ENCODE measurements at regions of chr6 and their contacts with region 1.

Region 1: GRCh38 chr6:37860226-37860839 is 40.8 kb downstream of the ZFAND3 start:
- DNase-seq: peak; percentile 53
- ATAC-seq: peak; percentile 35; the same call in 1 of the 3 replicates
- H3K4me3 ChIP-seq: no peak overlapping the region
- H3K27ac ChIP-seq: no peak overlapping the region
- H3K4me1 ChIP-seq: peaks cover 11% of the 10 kb centered on the region; the same call in 1 of the 2 replicates
- H3K27me3 ChIP-seq: no peaks in the 10 kb centered on the region
- CTCF ChIP-seq: peak; percentile 48
- EP300 ChIP-seq: no peak
- POLR2A ChIP-seq: no peak
- RAD21 ChIP-seq: peak; percentile 40; the same call in 1 of the 2 replicates

Region 2: DNA sequence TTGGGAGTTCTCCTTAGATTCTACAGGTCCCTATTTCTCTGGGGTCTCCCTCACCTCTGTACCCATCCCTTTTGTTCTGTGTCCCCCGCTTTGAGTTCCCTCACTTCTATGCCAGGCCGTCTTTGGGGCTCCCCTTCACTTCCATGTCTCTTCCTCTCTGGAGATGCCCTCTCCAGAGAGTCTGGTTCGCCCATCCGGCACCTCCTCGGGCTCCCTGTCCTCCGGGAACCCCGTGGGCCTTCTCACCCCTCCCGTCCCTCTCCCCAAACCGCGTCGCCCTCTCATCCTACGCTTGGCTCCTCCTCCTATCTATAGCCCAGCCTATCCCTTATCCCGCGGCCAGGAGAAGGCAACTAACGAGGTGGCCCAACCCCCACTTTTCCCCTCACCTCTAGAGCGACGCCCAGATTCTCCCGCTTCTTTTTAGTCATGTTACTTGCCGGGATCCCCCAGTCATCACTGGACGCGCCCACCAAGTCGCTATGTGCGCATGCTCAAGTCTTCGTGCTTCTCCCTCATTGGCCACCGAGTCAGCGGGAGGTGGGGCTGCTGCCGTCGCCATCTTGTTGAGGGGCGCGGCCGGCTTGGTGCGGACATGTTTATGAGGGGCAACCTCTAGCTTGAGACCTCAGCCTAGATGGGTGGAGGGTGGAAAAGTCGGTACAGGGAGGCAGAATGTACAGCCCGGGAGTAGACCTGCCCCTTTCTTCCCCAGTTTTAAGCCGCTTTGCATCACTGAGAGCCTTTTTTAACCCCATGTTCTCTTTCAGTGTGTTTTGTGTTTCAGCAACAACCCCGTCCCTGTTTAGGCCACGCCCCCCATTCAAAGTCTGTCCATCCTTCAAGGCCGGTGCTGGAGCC is 360.7 kb before region 1 on chr6 and contains the start of gene CCDC167:
- CTCF ChIA-PET with region 1: no interaction called
- POLR2A ChIA-PET with region 1: no interaction called
- in situ Hi-C with region 1: no loop called
- intact Hi-C with region 1: no loop called
- DNase-seq: peak; percentile 98
- ATAC-seq: peak; percentile 98
- H3K4me3 ChIP-seq: peak within 1 kb of the TSS; percentile 67 to 84 (median 71)
- H3K27ac ChIP-seq: peak within 1 kb of the TSS; percentile 29
- H3K4me1 ChIP-seq: peaks cover 36% of the 10 kb centered on the region
- H3K27me3 ChIP-seq: no peaks in the 10 kb centered on the region; a peak in 1 of 5 replicates
- CTCF ChIP-seq: 0 out of 2 replicates have a peak, but pooled peaks have one; percentile 7
- EP300 ChIP-seq: peak in 1 of 2 experiments; percentile 50; a peak in 1 of 4 replicates
- POLR2A ChIP-seq: peak; percentile 42 to 51; a peak in 1 of 4 replicates
- RAD21 ChIP-seq: no peak
- total RNA-seq, gene CCDC167: 66.8 and 72.4 TPM in 2 replicates

Region 3: DNA sequence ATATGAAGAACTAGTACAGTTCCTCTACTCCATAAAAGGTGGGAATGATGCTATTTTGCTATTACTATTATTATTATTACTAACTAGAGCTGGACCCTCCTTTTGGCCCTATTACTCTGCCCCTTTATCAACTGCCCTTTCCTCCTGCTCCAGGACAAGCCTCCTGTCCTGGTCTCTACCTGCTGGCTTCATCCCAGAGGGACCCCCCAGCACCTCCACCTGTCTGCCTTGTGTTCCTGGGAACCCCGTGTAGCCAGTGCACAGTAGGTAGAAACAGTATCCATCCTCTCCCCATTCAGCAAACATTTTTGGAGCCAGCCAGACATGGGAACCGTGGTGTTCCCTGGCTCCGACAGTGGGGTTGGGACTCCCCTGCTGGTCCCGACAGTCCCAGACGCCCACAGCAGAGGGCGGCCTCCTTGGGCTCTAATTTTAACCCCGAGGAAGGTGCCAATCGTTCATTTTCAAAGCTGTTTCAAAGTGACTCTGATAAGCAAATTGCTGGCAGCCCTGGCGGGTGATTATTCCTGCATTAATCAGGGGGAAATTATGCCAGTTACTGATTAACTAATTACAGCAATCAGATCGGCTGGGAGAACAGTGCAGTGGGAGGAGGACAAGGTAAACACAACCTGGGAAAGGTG is 118.5 kb before region 1 on chr6:
- CTCF ChIA-PET with region 1: interaction called, 19 read pairs
- POLR2A ChIA-PET with region 1: no interaction called
- in situ Hi-C with region 1: no loop called
- intact Hi-C with region 1: loop called (anchors 5 kb)
- DNase-seq: peak; percentile 30
- ATAC-seq: peak; percentile 94
- H3K4me3 ChIP-seq: peak overlapping the region in 2 of 3 experiments; percentile 36 to 38; a peak in 2 of 6 replicates
- H3K27ac ChIP-seq: no peak overlapping the region
- H3K4me1 ChIP-seq: peaks cover 9% of the 10 kb centered on the region
- H3K27me3 ChIP-seq: peaks cover 0 to 32% of the 10 kb centered on the region in 2 experiments; a peak in 2 of 5 replicates
- CTCF ChIP-seq: peak; percentile 70
- EP300 ChIP-seq: no peak
- POLR2A ChIP-seq: no peak
- RAD21 ChIP-seq: peak; percentile 79

Region 4: GRCh38 chr6:37791156-37791919 is 69.0 kb before region 1 on chr6:
- CTCF ChIA-PET with region 1: interaction called, 16 read pairs
- POLR2A ChIA-PET with region 1: interaction called, 3 read pairs
- in situ Hi-C with region 1: loop called (anchors 5 kb)
- intact Hi-C with region 1: loop called (anchors 1 kb)
- DNase-seq: peak; percentile 98
- ATAC-seq: peak; percentile 95
- H3K4me3 ChIP-seq: peak overlapping the region in 2 of 3 experiments; percentile 26 to 55; a peak in 4 of 6 replicates
- H3K27ac ChIP-seq: no peak overlapping the region
- H3K4me1 ChIP-seq: peaks cover 64% of the 10 kb centered on the region
- H3K27me3 ChIP-seq: no peaks in the 10 kb centered on the region
- CTCF ChIP-seq: peak; percentile 99
- EP300 ChIP-seq: peak in 1 of 2 experiments; percentile 78; a peak in 2 of 4 replicates
- POLR2A ChIP-seq: no peak
- RAD21 ChIP-seq: peak; percentile 99